B cell (primary cell): ENCODE measurements at regions of chr17 and their contacts with region 1.

Region 1: GRCh38 chr17:21275579-21276263 is 8.8 kb upstream of the MAP2K3 start:
- DNase-seq: peak; percentile 93
- ATAC-seq: peak; percentile 86
- H3K4me3 ChIP-seq: peak overlapping the region; percentile 34 to 84 (median 71)
- H3K4me3 Mint-ChIP-seq: peak overlapping the region; percentile 98
- H3K27ac ChIP-seq: peak overlapping the region; percentile 86
- H3K27ac Mint-ChIP-seq: peak overlapping the region; percentile 86
- H3K4me1 ChIP-seq: peaks cover 35 to 41% of the 10 kb centered on the region in 2 donors
- H3K4me1 Mint-ChIP-seq: peaks cover 34% of the 10 kb centered on the region
- H3K27me3 ChIP-seq: no peaks in the 10 kb centered on the region
- H3K27me3 Mint-ChIP-seq: no peaks in the 10 kb centered on the region
- CTCF ChIP-seq: peak; percentile 34

Region 2: DNA sequence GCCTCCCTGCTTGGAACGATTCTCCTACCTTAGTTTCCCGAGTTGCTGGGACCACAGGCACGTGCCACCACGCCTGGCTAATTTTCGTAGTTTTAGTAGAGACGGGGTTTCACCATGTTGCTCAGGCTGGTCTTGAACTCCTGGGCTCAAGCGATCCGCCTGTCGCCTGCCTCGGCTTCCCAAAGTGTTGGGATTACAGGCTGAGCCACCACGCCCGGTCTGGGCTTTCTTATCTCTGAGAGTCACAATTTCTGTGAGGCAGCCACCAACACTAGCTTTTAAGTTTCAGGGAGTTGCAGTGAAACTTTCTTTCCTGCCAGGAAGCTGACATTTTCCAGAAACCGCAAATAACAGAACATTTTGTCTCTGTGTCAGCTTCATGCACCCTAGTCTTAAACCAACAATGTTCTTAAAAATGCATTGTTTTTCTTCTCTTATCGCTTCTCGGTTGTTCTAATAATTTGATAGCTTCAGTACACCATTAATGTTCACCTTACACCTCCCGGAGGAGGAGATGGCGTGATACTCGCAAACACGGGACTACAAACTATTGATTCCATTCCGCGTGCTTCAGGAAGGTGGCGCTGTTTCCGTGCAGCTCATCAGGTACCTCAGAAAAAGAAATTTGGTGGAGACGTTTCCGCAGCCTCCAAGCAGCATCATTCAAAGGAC is 156.3 kb before region 1 on chr17:
- CTCF ChIA-PET with region 1: interaction called, 41 read pairs
- POLR2A ChIA-PET with region 1: interaction called, 10 read pairs
- intact Hi-C with region 1: loop called (anchors 1 kb)
- DNase-seq: peak; percentile 81
- ATAC-seq: peak; percentile 92
- H3K4me3 ChIP-seq: no peak overlapping the region
- H3K4me3 Mint-ChIP-seq: no peak overlapping the region
- H3K27ac ChIP-seq: no peak overlapping the region
- H3K27ac Mint-ChIP-seq: peak overlapping the region; percentile 10
- H3K4me1 ChIP-seq: peaks cover 4% of the 10 kb centered on the region in 2 donors
- H3K4me1 Mint-ChIP-seq: peaks cover 4% of the 10 kb centered on the region
- H3K27me3 ChIP-seq: peaks cover 0 to 7% (median 1%) of the 10 kb centered on the region in 4 experiments
- H3K27me3 Mint-ChIP-seq: peaks cover 6% of the 10 kb centered on the region
- CTCF ChIP-seq: peak; percentile 83

Region 3: DNA sequence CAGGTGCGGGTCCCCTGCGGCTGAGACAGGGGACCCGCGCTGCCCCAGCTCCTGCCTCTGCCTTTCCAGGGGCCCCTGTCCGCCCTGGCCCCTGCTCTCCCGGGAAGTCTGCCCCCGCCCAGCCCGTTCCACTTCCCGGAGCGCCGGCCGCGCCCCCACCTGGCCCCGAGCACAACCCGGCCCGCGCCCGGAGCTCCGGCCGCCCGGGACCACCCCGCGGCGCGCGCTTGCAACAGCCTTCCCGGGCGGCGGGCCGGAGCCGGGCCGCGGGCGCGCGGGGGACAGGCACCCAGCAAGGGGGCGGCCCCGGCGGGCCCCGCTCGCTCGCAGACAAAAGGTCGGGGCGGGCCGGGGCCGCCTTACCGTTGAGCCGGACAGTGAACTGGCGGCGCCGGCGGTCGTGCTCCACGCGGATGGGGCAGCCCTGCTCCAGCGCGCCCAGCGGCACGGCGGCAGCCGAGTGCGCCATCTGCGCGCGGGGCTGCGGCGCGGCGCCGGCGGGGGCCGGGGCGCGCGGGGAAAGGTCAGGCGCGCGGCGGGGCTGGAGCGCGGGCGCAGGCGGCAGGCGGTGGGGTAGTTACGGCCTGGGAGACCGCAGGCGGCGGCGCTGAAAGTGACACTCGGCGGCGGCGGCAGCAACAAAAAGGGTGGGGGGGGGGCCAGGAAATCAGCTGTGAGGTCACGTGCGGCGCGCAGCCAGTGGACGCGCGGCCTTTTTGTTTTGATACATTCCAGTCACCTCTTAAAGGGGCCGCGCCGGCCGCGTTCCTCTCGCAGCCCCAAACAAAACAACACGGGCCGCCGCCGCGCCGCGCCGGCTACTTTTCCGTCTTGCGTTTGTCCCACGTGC is 22.7 kb before region 1 on chr17 and contains the start of gene NATD1:
- CTCF ChIA-PET with region 1: interaction called, 5 read pairs
- POLR2A ChIA-PET with region 1: interaction called, 10 read pairs
- intact Hi-C with region 1: loop called (anchors 1 kb)
- DNase-seq: peak; percentile 90
- ATAC-seq: peak; percentile 79
- H3K4me3 ChIP-seq: peak within 1 kb of the TSS; percentile 35 to 90 (median 61)
- H3K4me3 Mint-ChIP-seq: peak within 1 kb of the TSS; percentile 89
- H3K27ac ChIP-seq: peak within 1 kb of the TSS; percentile 5 to 70
- H3K27ac Mint-ChIP-seq: peak within 1 kb of the TSS; percentile 88
- H3K4me1 ChIP-seq: peaks cover 11 to 24% of the 10 kb centered on the region in 2 donors
- H3K4me1 Mint-ChIP-seq: peaks cover 22% of the 10 kb centered on the region
- H3K27me3 ChIP-seq: no peaks in the 10 kb centered on the region
- H3K27me3 Mint-ChIP-seq: peaks cover 5% of the 10 kb centered on the region
- CTCF ChIP-seq: no peak
- total RNA-seq, gene NATD1: 6.2 and 6.7 TPM in 2 replicates

Region 4: DNA sequence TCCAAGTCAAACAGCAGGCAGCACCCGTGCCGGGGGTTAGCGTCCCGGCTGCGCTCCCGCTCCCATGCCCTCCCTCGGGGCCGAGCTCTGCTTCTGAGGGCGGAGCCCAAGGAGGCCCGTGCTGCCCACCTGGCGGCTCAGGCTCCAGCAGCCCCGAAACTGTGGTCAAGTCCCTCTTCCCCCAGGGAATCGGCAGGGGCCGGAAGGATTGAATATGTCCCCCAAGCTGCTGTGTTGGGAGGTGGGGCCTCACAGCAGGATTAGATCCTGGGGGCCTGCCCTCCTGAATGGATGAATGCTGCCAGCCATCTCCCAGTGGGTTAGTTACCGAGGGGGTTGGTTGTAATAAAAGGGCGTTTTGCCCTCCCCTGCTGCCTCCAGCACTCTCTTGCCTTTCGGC is 42.7 kb after region 1 on chr17:
- CTCF ChIA-PET with region 1: interaction called, 7 read pairs
- POLR2A ChIA-PET with region 1: no interaction called
- intact Hi-C with region 1: loop called (anchors 2 kb)
- DNase-seq: no peak
- ATAC-seq: no peak
- H3K4me3 ChIP-seq: no peak overlapping the region
- H3K4me3 Mint-ChIP-seq: no peak overlapping the region
- H3K27ac ChIP-seq: no peak overlapping the region
- H3K27ac Mint-ChIP-seq: no peak overlapping the region
- H3K4me1 ChIP-seq: peaks cover 0 to 9% of the 10 kb centered on the region in 2 donors
- H3K4me1 Mint-ChIP-seq: peaks cover 7% of the 10 kb centered on the region
- H3K27me3 ChIP-seq: peaks cover 0 to under 1% (median 0%) of the 10 kb centered on the region in 4 experiments
- H3K27me3 Mint-ChIP-seq: peaks cover 3% of the 10 kb centered on the region
- CTCF ChIP-seq: no peak

Region 5: DNA sequence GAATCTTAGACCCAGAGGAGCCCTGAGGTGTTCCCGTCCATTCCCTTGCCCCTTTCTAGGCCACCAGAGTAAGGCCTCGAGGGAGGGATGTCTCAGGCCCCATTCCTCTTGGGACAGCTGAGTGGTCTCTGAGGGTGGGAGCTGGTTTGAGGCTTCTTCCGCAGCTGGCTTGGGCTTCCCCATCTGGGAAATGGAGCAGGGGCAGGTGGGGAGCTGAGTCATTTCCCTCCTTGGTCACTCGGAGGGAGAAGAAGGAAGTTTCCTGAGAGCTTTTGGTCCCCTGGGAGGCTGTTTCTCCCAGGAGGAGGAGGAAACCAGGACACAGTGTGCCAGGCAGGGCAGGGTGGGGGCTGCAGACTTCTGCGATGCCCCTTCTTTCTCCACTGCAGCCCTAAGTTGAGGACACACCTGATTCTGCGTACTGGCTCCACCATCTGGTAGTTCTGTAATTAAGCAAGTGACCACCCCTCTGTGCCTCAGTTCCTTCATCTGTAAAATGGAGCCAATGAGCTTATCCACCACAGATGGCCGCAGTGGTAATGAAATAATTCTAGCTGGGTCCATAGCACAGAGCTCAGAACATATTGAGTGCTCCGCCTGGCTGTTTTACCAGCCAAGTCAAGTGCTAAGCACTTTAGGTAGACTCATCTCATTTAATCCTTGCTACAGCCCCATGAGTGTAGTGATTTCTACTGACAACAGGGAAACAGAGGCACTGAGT is 98.9 kb after region 1 on chr17:
- CTCF ChIA-PET with region 1: interaction called, 8 read pairs
- POLR2A ChIA-PET with region 1: no interaction called
- intact Hi-C with region 1: loop called (anchors 1 kb)
- DNase-seq: no peak
- ATAC-seq: peak; percentile 17
- H3K4me3 ChIP-seq: no peak overlapping the region
- H3K4me3 Mint-ChIP-seq: no peak overlapping the region
- H3K27ac ChIP-seq: no peak overlapping the region
- H3K27ac Mint-ChIP-seq: no peak overlapping the region
- H3K4me1 ChIP-seq: peaks cover 27% of the 10 kb centered on the region in 2 donors
- H3K4me1 Mint-ChIP-seq: peaks cover 25% of the 10 kb centered on the region
- H3K27me3 ChIP-seq: peaks cover 0 to 68% (median 19%) of the 10 kb centered on the region in 4 experiments
- H3K27me3 Mint-ChIP-seq: peaks cover 27% of the 10 kb centered on the region
- CTCF ChIP-seq: no peak

Region 6: GRCh38 chr17:21551081-21551881 is 275.6 kb after region 1 on chr17:
- CTCF ChIA-PET with region 1: no interaction called
- POLR2A ChIA-PET with region 1: no interaction called
- intact Hi-C with region 1: loop called (anchors 5 kb)
- DNase-seq: peak; percentile 83
- ATAC-seq: peak; percentile 96
- H3K4me3 ChIP-seq: peak overlapping the region in 4 of 5 experiments; percentile 70 to 82 (median 72)
- H3K4me3 Mint-ChIP-seq: peak overlapping the region; percentile 89
- H3K27ac ChIP-seq: no peak overlapping the region
- H3K27ac Mint-ChIP-seq: peak overlapping the region; percentile 50
- H3K4me1 ChIP-seq: peaks cover 10 to 11% of the 10 kb centered on the region in 2 donors
- H3K4me1 Mint-ChIP-seq: peaks cover 19% of the 10 kb centered on the region
- H3K27me3 ChIP-seq: peaks cover 0 to 16% (median 4%) of the 10 kb centered on the region in 4 experiments
- H3K27me3 Mint-ChIP-seq: peaks cover 31% of the 10 kb centered on the region
- CTCF ChIP-seq: no peak